ENCODE measurements at regions of chr10 and their contacts with region 1.

Region 1: DNA sequence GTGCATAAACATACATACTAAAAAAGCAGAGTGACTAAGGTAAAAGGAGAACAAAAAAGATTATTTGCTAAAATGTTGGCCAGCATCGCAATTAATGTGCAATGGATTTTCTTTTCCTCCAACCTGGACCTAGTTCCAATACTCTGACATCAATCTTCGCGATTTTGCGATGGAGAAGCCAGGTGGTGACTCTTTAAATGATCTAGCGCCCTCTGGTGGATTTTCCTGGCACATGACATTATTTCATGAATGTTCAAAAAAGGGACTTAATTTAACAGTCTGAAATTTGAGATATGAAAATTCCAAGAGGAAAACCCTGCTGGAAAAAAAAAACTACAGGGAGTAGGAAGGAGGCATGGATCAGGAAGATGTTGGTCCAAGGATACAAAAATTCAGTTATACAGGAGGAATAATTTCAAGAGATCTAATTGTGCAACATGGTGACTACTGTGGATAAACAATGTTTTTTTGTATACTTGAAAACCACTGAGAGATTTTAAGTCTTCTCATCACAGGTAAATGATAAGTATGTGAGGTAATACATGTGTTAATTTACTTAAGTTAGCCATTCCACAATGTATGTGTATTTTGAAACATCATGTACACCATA is 4.3 kb upstream of the KCNMA1 start:
- DNase-seq: peak; percentile 58
- H3K4me3 ChIP-seq: no peak overlapping the region
- H3K27ac ChIP-seq: no peak overlapping the region
- H3K4me1 ChIP-seq: peaks cover 12% of the 10 kb centered on the region
- H3K27me3 ChIP-seq: no peaks in the 10 kb centered on the region
- CTCF ChIP-seq: peak; percentile 71 to 78

Region 2: GRCh38 chr10:77173615-77174461 is 468.1 kb before region 1 on chr10:
- CTCF ChIA-PET with region 1: no interaction called
- dilution Hi-C with region 1: loop called (anchors 25 kb)
- in situ Hi-C with region 1: loop called (anchors 5 kb)
- intact Hi-C with region 1: loop called (anchors 1 kb)
- DNase-seq: peak; percentile 62
- H3K4me3 ChIP-seq: no peak overlapping the region
- H3K27ac ChIP-seq: no peak overlapping the region
- H3K4me1 ChIP-seq: peaks cover 7% of the 10 kb centered on the region
- H3K27me3 ChIP-seq: no peaks in the 10 kb centered on the region
- CTCF ChIP-seq: peak; percentile 93 to 95

Region 3: DNA sequence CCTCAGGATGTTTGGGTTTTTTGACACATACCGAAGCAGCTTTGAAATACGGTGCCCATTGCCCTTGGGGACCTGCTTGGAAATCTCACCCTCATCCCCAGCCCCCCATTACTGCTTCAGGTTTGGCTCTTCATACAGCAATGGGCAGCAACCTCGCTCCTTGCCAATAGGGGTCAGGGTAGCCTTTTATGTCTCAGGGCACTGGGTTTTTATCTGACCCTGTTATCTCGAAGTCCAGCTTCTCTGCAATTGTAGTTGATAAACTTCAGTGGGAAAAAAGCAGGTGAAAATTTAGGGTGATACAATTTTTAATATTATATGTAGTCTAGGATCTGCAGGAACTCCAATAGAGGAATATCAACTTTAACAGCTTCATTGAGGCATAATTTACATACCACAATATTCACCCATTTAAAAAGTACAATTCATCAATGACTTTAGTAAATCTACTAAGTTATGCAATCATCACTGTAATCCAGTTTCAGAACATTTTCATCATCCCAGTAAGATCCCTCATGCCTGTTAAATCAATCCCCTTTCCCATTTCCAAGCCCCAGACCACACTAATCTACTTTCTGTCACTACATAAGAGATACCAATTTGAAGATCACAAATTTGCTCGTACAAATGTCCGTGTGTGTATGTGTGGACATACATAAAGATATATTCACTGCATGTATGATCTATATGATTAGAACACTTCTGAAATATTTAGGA is 390.4 kb before region 1 on chr10:
- CTCF ChIA-PET with region 1: interaction called, 3 read pairs
- dilution Hi-C with region 1: no loop called
- in situ Hi-C with region 1: no loop called
- intact Hi-C with region 1: loop called (anchors 1 kb)
- DNase-seq: peak; percentile 29
- H3K4me3 ChIP-seq: no peak overlapping the region
- H3K27ac ChIP-seq: no peak overlapping the region
- H3K4me1 ChIP-seq: peaks cover 10% of the 10 kb centered on the region
- H3K27me3 ChIP-seq: no peaks in the 10 kb centered on the region
- CTCF ChIP-seq: peak; percentile 67 to 77

Region 4: DNA sequence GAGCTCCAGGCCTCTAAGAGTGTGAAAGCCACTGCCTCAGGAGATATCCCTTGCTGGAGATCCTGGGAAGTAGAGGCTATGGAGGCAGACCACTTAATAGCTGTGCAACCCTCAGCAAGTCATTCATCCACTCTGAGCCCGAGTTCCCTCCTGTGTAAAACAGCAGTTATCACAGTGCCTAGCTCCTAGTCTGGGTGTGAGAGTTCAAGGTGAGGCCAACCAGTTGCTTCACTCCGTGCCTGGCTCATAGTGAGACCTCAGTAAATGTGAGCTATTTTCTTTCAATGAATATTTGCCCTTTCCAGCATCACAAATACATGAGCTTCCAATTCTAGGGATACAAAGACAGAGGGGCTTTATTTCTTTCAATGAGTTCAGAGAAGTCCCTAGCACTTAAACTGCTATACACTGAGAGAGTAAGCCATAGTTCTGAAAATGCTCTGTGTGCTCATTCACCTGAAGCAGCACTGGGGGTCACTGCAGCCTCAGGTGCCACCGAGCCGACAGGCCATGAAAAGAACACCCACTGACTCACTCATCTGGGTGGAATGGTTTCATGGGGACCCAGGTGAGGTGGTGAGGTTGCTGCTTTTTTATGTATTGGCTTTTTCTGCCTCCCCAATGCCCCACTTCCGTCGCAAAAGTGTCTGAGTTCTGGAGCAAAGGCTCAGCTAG is 264.1 kb before region 1 on chr10:
- CTCF ChIA-PET with region 1: no interaction called
- dilution Hi-C with region 1: loop called (anchors 25 kb)
- in situ Hi-C with region 1: loop called in 1 of 2 experiments (anchors 25 kb)
- intact Hi-C with region 1: loop called (anchors 1 kb)
- DNase-seq: no peak
- H3K4me3 ChIP-seq: no peak overlapping the region
- H3K27ac ChIP-seq: no peak overlapping the region
- H3K4me1 ChIP-seq: peaks cover 8% of the 10 kb centered on the region
- H3K27me3 ChIP-seq: no peaks in the 10 kb centered on the region
- CTCF ChIP-seq: peak; percentile 11 to 20

Region 5: DNA sequence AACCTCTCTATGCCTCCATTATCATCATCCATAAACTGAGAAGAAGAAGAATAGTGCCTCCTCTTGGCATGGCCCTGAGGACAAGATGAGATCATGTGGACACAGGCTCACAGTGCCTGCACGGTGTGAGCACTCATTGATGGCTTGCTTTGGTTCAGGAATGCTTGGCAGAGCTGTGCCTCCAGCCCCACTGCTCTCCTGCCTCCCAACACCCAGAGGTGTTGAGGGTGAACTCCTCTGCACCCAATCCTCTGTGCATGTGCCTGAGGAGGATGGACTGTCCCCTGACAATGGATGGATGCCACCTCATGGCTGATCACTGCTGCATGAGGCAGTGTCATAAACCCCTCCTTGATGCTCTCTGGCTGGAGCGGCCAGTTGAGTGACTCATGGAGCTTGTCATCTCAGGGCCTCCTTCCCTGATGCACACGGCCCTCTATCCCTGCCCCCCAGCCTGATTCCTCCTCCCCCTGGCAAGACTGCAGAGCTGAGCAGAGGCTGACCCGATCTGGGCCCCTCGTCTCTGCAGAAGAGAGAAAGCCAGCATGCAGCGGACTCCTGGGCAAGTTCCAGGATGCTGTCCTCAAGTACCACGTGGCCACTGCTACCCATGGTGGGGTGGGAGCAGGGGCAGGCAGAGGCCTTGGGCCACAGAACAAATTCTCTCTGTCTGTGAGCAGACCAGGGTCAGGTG is 140.6 kb before region 1 on chr10:
- CTCF ChIA-PET with region 1: interaction called, 5 read pairs
- dilution Hi-C with region 1: no loop called
- in situ Hi-C with region 1: no loop called
- intact Hi-C with region 1: loop called (anchors 5 kb)
- DNase-seq: peak; percentile 78
- H3K4me3 ChIP-seq: no peak overlapping the region
- H3K27ac ChIP-seq: peak overlapping the region; percentile 45
- H3K4me1 ChIP-seq: peaks cover 69% of the 10 kb centered on the region
- H3K27me3 ChIP-seq: no peaks in the 10 kb centered on the region
- CTCF ChIP-seq: no peak

Region 6: DNA sequence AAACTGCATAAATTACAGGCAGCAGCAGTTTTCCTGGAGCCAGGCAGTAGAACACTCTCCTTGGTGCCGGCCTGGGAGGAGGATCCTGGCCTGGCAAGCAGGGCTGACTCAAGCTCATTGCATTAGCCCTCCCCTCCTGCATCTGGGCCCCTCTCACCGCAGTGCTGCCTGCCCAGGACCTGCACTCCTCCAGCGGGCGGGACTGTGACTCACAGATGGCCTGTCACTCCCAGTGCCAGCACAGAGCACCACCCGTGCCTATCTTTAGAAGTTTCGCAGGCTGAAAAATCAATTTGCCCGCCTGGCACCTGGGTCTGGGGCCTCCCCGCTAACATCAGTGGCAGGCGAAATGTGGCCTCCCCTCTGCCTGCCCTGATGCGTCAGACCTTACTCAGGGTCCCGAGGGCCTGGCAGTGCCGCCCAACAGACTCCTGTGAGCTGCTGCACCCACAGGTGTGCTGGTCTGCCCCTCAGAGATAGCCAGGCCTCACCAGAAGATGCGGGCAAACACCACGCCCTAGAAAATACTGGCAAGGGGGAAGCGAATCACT is 128.0 kb before region 1 on chr10:
- CTCF ChIA-PET with region 1: no interaction called
- dilution Hi-C with region 1: no loop called
- in situ Hi-C with region 1: no loop called
- intact Hi-C with region 1: loop called (anchors 5 kb)
- DNase-seq: peak; percentile 92
- H3K4me3 ChIP-seq: peak overlapping the region in 1 of 3 experiments; percentile 7
- H3K27ac ChIP-seq: peak overlapping the region; percentile 56
- H3K4me1 ChIP-seq: peaks cover 48% of the 10 kb centered on the region
- H3K27me3 ChIP-seq: no peaks in the 10 kb centered on the region
- CTCF ChIP-seq: no peak

Region 7: GRCh38 chr10:77756319-77757232 is 114.7 kb after region 1 on chr10:
- CTCF ChIA-PET with region 1: no interaction called
- dilution Hi-C with region 1: no loop called
- in situ Hi-C with region 1: no loop called
- intact Hi-C with region 1: loop called (anchors 2 kb)
- DNase-seq: peak; percentile 33
- H3K4me3 ChIP-seq: no peak overlapping the region
- H3K27ac ChIP-seq: no peak overlapping the region
- H3K4me1 ChIP-seq: peaks cover 8% of the 10 kb centered on the region
- H3K27me3 ChIP-seq: no peaks in the 10 kb centered on the region
- CTCF ChIP-seq: peak; percentile 79 to 85

Measured in mammary epithelial cell (primary cell).